ENCODE measurements at regions of chr7 and their contacts with region 1.

Region 1: DNA sequence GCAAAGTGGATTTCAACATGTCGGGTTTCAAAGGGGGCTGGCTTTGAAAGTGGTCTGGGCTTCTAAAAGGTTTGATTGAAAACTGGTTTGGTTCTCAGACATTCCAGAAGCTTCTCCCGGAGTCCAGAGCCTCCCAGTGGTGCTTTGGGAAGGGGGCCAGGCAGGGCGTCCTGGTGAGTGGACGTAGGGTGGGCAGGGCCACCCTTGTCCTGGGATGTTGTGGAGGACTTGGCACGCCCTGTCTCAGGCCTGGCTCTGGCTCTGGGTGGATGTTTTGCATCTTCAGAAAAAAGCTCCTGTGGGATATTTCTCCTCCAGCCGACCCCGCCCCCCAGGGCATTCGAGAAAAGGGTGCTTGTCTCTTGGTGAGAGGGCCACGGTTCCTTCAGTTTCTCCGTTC is 31.2 kb downstream of the GRIFIN start:
- DNase-seq: peak; percentile 41 to 79
- H3K4me3 ChIP-seq: no peak overlapping the region
- H3K27ac ChIP-seq: peak overlapping the region; percentile 46 to 60
- H3K4me1 ChIP-seq: peaks cover 0 to 20% (median 13%) of the 10 kb centered on the region in 4 donors
- H3K27me3 ChIP-seq: no peaks in the 10 kb centered on the region
- CTCF ChIP-seq: no peak

Region 2: DNA sequence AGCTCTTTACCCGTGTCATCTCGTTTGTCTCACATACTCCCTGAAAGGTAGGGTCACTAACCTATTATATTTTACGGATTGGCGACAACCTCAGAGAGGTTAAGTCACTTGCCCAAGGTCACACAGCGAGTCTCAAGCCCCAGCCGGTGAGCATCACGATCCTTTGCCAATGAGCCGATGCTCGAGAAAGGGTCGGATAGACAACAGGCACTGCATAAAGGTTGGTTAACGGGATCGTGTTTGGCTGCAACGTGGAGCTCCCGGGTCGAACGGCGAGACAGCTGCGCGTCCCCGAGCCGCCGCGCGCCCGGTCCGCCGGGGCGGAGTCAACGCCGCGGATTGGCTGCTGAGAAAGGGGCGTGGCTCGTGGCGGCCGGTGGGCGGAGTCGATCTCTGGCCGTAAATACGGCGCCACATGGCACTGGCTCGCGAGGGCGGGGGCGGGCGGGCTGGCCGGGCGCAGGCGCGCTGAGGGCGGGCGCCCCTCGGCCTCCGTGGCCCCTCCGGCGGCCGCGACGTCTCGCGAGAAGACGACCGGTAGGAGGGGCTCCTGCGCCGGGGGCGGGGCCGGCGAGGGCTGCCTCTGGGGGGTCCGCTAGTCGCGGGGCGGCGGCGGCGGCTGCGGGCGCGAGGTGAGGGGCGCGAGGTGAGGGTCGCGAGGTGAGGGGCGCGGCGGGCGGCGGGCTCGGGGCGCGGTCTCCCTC is 41.9 kb before region 1 on chr7 and contains the start of gene CHST12:
- intact Hi-C with region 1: no loop called
- DNase-seq: peak; percentile 92 to 96
- H3K4me3 ChIP-seq: peak within 1 kb of the TSS; percentile 89 to 97
- H3K27ac ChIP-seq: peak within 1 kb of the TSS; percentile 75 to 79
- H3K4me1 ChIP-seq: peaks cover 0 to 38% (median 24%) of the 10 kb centered on the region in 4 donors
- H3K27me3 ChIP-seq: no peaks in the 10 kb centered on the region
- CTCF ChIP-seq: no peak

Region 3: GRCh38 chr7:2680792-2681490 is 235.9 kb after region 1 on chr7:
- intact Hi-C with region 1: loop called (anchors 5 kb)
- DNase-seq: peak; percentile 82 to 87
- H3K4me3 ChIP-seq: no peak overlapping the region
- H3K27ac ChIP-seq: no peak overlapping the region
- H3K4me1 ChIP-seq: peaks cover 0 to 12% (median 4%) of the 10 kb centered on the region in 4 donors
- H3K27me3 ChIP-seq: peaks cover 0 to 36% of the 10 kb centered on the region in 2 donors
- CTCF ChIP-seq: peak; percentile 73 to 80

Measured in tibial artery (tissue), 4 donors.